ENCODE measurements at regions of chr18 and their contacts with region 1.

Region 1: GRCh38 chr18:58128381-58129374 is 84.7 kb downstream of the NEDD4L start:
- DNase-seq: no peak
- H3K4me3 ChIP-seq: no peak overlapping the region
- H3K27ac ChIP-seq: no peak overlapping the region
- H3K4me1 ChIP-seq: no peaks in the 10 kb centered on the region
- H3K27me3 ChIP-seq: 0 out of 2 replicates have a peak, but pooled peaks cover 5% of the 10 kb centered on the region

Region 2: DNA sequence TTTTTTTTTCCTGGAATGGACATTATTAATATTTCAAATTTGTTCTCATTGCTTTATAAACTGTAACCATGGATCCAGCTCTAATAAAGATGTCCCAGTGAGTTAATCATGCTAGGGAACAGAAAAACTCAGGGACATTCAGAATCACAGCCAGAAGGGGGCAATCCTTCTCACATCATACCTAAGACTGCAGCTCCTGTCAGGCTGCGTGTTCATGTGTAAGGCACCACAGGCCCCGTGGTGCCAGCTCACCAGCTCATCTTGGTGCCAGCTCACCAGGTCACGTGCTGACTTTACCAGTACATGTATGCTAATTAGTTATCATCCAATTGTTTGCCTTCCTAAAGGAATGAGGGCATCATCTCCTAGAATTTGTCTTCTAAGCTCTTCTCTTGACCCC is 169.4 kb before region 1 on chr18:
- in situ Hi-C with region 1: loop called (anchors 10 kb)
- DNase-seq: peak; percentile 78
- H3K4me3 ChIP-seq: no peak overlapping the region
- H3K27ac ChIP-seq: no peak overlapping the region
- H3K4me1 ChIP-seq: peaks cover 6% of the 10 kb centered on the region
- H3K27me3 ChIP-seq: peaks cover 35% of the 10 kb centered on the region; the same call in 1 of the 2 replicates

Region 3: DNA sequence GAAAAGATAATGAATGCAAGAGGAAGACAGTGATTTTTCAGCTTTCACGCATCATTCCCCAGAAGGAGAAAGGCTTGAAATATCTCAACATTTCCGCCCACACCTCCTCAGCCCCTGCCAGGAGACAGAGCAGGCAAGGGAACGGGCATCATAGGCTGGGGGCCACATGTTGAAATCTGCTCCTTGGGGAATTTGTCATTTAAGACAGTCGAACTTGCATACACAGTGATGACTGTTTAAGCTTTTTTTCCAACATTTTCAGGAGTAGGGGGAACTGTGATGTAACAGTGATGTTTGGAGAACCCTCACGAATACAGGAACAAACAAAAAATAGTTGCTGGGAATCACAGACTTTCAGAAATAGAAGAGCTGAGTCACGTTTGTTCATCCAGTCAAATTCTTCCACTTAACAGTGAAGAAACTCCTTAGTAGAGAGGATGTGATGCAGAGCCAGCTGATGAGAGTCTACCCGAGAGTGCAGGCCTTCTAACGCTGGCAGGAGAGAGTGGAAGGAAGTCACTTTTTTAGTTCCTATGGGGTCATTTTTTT is 233.4 kb after region 1 on chr18:
- in situ Hi-C with region 1: no loop called
- DNase-seq: peak; percentile 98
- H3K4me3 ChIP-seq: peak overlapping the region; percentile 46
- H3K27ac ChIP-seq: peak overlapping the region; percentile 98
- H3K4me1 ChIP-seq: peaks cover 45% of the 10 kb centered on the region
- H3K27me3 ChIP-seq: no peaks in the 10 kb centered on the region

Region 4: GRCh38 chr18:58541789-58542425 is 413.2 kb after region 1 on chr18:
- in situ Hi-C with region 1: no loop called
- DNase-seq: peak; percentile 98
- H3K4me3 ChIP-seq: no peak overlapping the region
- H3K27ac ChIP-seq: peak overlapping the region; percentile 87
- H3K4me1 ChIP-seq: peaks cover 26% of the 10 kb centered on the region
- H3K27me3 ChIP-seq: no peaks in the 10 kb centered on the region

Measured in GM23248 (cell line).